Activated CD4-positive, alpha-beta T cell treated with anti-CD3 and anti-CD28 coated beads, Interleukin-2, amount 10 ng/mL, durations not matched to agents 24 days and 14 days (primary cell): ENCODE measurements at regions of chr11 and their contacts with region 1.

Region 1: GRCh38 chr11:65919146-65920033 is at the start of gene DRAP1:
- DNase-seq: peak; percentile 99
- H3K4me3 Mint-ChIP-seq: peak within 1 kb of the TSS; percentile 96
- H3K27ac Mint-ChIP-seq: peak within 1 kb of the TSS; percentile 90
- H3K4me1 Mint-ChIP-seq: peaks cover 25% of the 10 kb centered on the region
- H3K27me3 Mint-ChIP-seq: no peaks in the 10 kb centered on the region
- total RNA-seq, gene DRAP1: 113 and 117 TPM in 2 replicates

Region 2: DNA sequence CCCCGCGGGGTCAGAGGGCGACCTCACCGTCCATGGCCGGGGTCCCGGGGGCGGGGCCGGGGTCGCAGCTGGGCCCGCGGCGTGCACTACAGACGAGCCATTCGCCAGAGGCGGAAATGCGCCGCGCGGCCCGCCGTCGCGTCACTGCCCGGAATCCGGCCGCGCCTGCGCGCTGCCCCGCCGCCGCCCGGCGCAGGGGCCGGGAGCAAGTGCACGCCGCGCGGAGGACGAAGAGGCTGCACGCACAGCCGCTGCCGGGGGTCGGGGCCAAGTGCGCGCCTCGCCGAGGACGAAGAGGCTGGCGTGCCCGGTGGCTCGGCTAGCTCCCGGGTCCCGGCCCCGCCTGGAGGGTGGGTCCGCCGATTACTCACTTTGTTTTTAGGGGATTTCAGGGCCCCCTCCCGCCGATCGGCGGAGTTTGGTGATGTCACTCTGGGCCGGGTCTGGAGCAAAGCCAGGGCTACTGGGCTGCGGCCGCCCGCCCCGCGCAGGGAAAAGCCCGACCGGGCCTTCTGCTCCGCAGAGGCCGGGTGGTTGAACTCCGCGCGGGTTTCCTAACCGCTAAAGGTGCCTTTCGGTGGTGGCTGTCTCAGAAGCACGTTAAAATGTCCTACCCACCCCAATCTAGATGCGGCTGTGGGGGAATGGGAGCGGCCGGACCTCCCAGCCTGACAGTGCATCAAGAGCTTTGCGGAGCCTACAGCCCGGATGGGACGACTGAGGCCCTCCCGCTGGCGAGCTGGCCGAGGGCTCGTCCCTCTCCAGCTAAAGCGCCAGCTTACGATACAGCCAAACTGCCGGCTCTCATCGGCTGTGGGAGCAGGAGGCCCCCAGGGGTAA is 256.4 kb before region 1 on chr11 and contains the start of gene RELA:
- intact Hi-C with region 1: loop called (anchors 1 kb)
- DNase-seq: peak; percentile 97
- H3K4me3 Mint-ChIP-seq: peak within 1 kb of the TSS; percentile 92
- H3K27ac Mint-ChIP-seq: peak within 1 kb of the TSS; percentile 93
- H3K4me1 Mint-ChIP-seq: peaks cover 24% of the 10 kb centered on the region
- H3K27me3 Mint-ChIP-seq: no peaks in the 10 kb centered on the region
- total RNA-seq, gene RELA: 95.7 and 98.2 TPM in 2 replicates

Region 3: GRCh38 chr11:65900125-65900898 is 19.1 kb before region 1 on chr11 and contains the start of gene FOSL1:
- intact Hi-C with region 1: loop called (anchors 1 kb)
- DNase-seq: peak; percentile 97
- H3K4me3 Mint-ChIP-seq: peak within 1 kb of the TSS; percentile 82
- H3K27ac Mint-ChIP-seq: peak within 1 kb of the TSS; percentile 78
- H3K4me1 Mint-ChIP-seq: peaks cover 37% of the 10 kb centered on the region
- H3K27me3 Mint-ChIP-seq: peaks cover 10% of the 10 kb centered on the region
- total RNA-seq, gene FOSL1: 32.1 and 32.9 TPM in 2 replicates

Region 4: DNA sequence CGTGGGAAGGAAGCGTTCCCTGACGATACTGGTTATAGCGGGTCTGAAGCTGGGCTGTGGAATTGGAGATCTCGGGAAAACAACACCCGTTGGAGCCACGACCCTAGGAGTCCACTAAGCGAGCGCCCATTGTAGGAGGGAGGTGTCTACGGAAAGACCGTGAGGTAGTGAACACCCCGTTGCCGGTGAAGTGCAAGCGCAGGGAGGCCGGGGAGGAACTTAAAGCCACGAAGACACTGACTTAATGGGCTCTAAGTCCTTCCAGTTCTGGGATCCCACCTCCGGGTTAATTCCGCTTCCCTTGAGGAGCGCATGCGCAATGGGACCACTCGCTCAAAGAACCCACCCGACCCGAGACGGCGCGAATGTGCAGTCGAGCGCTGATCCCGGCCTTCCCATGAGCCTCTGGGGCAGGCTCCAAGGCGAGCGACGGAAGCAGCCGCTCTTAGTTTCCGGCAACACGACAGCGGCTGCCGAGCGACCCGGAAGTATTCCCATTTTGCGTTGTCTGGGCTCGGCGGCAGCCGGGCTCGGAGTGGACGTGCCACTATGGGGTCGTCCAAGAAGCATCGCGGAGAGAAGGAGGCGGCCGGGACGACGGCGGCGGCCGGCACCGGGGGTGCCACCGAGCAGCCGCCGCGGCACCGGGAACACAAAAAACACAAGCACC is 42.0 kb after region 1 on chr11 and contains the start of gene SART1:
- intact Hi-C with region 1: loop called (anchors 1 kb)
- DNase-seq: peak; percentile 99
- H3K4me3 Mint-ChIP-seq: peak within 1 kb of the TSS; percentile 90
- H3K27ac Mint-ChIP-seq: peak within 1 kb of the TSS; percentile 95
- H3K4me1 Mint-ChIP-seq: peaks cover 42% of the 10 kb centered on the region
- H3K27me3 Mint-ChIP-seq: peaks cover 1% of the 10 kb centered on the region
- total RNA-seq, gene SART1: 99.1 and 104 TPM in 2 replicates

Region 5: GRCh38 chr11:65988791-65989592 is 69.6 kb after region 1 on chr11:
- intact Hi-C with region 1: loop called (anchors 1 kb)
- DNase-seq: peak; percentile 98
- H3K4me3 Mint-ChIP-seq: no peak overlapping the region
- H3K27ac Mint-ChIP-seq: peak overlapping the region; percentile 80
- H3K4me1 Mint-ChIP-seq: peaks cover 6% of the 10 kb centered on the region
- H3K27me3 Mint-ChIP-seq: no peaks in the 10 kb centered on the region